Activated CD4-positive, alpha-beta T cell treated with anti-CD3 and anti-CD28 coated beads for 36 hours (primary cell): ENCODE measurements at regions of chr2 and their contacts with region 1.

Region 1: DNA sequence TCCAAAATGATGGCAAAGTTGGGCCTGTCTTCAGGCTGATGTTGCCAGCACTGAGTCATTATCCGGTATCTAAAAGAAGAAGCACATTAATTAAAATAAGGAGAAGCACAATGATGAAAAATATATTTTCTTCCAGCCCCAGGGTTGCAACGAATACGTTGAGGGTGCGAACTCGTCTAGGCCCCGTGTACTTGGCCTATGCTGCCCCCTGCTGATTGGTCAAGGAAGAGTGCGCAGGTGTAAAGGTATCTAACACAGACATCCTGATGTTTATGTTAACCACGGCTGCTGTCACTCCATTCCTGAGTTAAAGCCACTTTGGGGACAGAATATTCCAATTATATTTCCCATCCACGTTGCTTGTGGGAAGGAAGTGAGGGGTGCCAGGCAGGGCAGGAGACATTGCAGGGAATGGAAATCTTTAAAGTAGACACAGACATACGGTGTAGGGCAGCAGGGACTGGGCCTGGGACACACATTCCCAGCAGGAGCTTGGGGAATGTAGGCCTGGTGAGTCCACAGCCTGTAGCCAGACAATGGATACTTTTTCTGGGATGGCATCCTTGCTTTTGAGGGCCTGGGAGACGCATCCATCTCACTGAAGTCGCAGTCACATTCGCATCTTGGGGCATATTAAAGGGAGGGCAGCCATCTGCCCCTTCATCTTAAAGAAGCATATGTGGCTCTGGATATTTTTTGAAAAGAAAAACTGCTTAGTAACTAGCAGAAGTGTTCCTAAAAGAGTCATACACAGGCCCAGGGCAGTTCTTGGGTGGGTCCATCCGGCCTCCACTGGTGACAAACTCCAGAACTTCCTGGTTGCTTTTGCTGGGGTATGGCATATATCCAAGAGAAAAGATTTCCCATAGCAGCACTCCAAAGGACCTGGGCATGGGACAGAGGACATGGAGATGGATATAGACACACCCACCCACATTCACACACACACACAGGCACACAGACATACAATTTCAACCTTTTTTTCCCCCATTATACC is 81.9 kb downstream of the CLIP4 start:
- DNase-seq: peak; percentile 89
- ATAC-seq: peak; percentile 98
- H3K4me3 Mint-ChIP-seq: no peak overlapping the region
- H3K27ac Mint-ChIP-seq: no peak overlapping the region
- H3K4me1 Mint-ChIP-seq: peaks cover 3% of the 10 kb centered on the region
- H3K27me3 Mint-ChIP-seq: no peaks in the 10 kb centered on the region

Region 2: GRCh38 chr2:28621172-28622100 is 575.7 kb before region 1 on chr2:
- CTCF ChIA-PET with region 1: no interaction called
- POLR2A ChIA-PET with region 1: no interaction called
- intact Hi-C with region 1: no loop called
- DNase-seq: peak; percentile 81
- ATAC-seq: peak; percentile 73
- H3K4me3 Mint-ChIP-seq: peak overlapping the region; percentile 49
- H3K27ac Mint-ChIP-seq: peak overlapping the region; percentile 96
- H3K4me1 Mint-ChIP-seq: peaks cover 95% of the 10 kb centered on the region
- H3K27me3 Mint-ChIP-seq: no peaks in the 10 kb centered on the region

Region 3: DNA sequence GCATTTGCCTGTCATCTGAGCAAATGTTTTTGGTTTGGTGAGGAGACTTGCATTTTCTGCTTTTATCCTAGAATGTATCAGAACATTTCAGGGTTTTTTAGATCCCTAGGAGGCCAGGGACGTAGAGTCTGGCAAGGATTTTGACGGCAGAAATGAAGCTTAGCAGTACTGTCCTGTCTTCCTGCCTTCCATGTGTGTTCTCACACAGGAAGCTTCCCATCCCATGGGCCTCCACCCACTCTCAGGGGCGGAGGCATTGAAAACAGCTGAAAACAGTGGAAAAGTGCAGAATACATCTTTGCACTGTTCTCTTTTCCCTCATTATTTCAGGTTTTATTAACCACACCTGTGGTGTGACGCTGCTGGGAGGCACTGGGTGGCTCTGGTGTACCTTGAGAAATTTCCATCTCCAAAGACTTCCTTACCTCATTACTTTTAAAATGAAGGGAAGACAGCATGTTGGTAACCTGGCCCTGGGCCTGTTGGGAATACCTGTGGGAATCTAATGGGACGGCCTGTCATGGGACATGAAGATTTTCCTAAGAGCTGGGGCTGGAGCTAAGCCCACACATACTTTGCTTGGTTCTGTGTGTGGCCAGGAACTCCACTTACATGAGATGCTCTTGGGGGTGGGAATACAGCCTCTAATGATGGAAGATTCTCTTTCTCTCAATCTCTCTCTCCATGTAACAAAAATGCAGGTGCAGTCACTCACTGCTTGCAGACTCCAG is 143.3 kb before region 1 on chr2:
- CTCF ChIA-PET with region 1: no interaction called
- POLR2A ChIA-PET with region 1: no interaction called
- intact Hi-C with region 1: loop called in 1 of 2 experiments (anchors 5 kb)
- DNase-seq: no peak
- ATAC-seq: no peak
- H3K4me3 Mint-ChIP-seq: no peak overlapping the region
- H3K27ac Mint-ChIP-seq: no peak overlapping the region
- H3K4me1 Mint-ChIP-seq: peaks cover 5% of the 10 kb centered on the region
- H3K27me3 Mint-ChIP-seq: no peaks in the 10 kb centered on the region

Region 4: DNA sequence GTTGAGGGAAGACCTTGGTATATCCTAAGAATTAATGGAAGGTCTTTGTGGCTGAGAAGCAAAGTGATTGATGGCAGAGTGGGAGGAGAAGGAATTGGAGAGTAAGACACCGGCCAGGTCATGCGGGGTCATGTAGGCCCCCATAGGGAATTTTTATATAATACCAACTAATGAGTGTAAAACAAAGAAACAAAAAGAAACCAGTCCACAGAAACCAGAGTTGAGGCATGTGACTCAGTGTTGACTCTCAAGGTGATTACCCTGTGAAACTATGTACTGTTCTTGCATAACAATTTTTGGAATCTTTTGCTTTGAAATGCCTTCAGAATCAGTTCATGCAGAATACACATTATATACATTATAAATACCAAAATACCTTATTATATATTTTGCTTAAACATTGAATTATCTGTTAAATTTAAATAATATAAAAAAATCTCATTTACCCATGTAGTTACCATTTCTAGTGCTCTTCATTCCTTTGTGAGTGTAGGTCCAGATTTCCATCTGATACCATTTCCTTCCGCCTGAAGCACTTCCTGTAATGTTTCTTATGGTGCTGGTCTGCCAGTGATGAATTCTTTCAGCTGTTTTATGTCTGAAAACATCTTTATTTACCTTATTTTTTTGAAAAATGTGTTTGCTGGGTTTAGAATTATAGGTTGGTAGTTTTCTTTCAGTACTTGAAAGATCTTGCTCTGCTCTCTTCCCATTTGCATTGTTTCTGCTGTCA is 73.3 kb before region 1 on chr2:
- CTCF ChIA-PET with region 1: no interaction called
- POLR2A ChIA-PET with region 1: no interaction called
- intact Hi-C with region 1: no loop called
- DNase-seq: peak; percentile 24
- ATAC-seq: peak; percentile 80
- H3K4me3 Mint-ChIP-seq: no peak overlapping the region
- H3K27ac Mint-ChIP-seq: peak overlapping the region; percentile 3
- H3K4me1 Mint-ChIP-seq: peaks cover 41% of the 10 kb centered on the region
- H3K27me3 Mint-ChIP-seq: no peaks in the 10 kb centered on the region